Activated naive CD4-positive, alpha-beta T cell treated with anti-CD3 and anti-CD28 coated beads for 36 hours (primary cell): ENCODE measurements at regions of chr1 and their contacts with region 1.

Region 1: GRCh38 chr1:113949007-113949406 is 19.9 kb downstream of the HIPK1 start:
- DNase-seq: no peak
- H3K4me3 Mint-ChIP-seq: no peak overlapping the region
- H3K27ac Mint-ChIP-seq: peak overlapping the region; percentile 79
- H3K4me1 Mint-ChIP-seq: peaks cover 74% of the 10 kb centered on the region
- H3K27me3 Mint-ChIP-seq: no peaks in the 10 kb centered on the region

Region 2: GRCh38 chr1:113133038-113133437 is 816.0 kb before region 1 on chr1:
- CTCF ChIA-PET with region 1: no interaction called
- intact Hi-C with region 1: loop called (anchors 10 kb)
- DNase-seq: peak; percentile 69
- H3K4me3 Mint-ChIP-seq: no peak overlapping the region
- H3K27ac Mint-ChIP-seq: peak overlapping the region; percentile 76
- H3K4me1 Mint-ChIP-seq: peaks cover 64% of the 10 kb centered on the region
- H3K27me3 Mint-ChIP-seq: no peaks in the 10 kb centered on the region

Region 3: GRCh38 chr1:113826162-113826561 is 122.8 kb before region 1 on chr1:
- CTCF ChIA-PET with region 1: no interaction called
- intact Hi-C with region 1: no loop called
- DNase-seq: no peak
- H3K4me3 Mint-ChIP-seq: no peak overlapping the region
- H3K27ac Mint-ChIP-seq: no peak overlapping the region
- H3K4me1 Mint-ChIP-seq: peaks cover 8% of the 10 kb centered on the region
- H3K27me3 Mint-ChIP-seq: no peaks in the 10 kb centered on the region

Region 4: DNA sequence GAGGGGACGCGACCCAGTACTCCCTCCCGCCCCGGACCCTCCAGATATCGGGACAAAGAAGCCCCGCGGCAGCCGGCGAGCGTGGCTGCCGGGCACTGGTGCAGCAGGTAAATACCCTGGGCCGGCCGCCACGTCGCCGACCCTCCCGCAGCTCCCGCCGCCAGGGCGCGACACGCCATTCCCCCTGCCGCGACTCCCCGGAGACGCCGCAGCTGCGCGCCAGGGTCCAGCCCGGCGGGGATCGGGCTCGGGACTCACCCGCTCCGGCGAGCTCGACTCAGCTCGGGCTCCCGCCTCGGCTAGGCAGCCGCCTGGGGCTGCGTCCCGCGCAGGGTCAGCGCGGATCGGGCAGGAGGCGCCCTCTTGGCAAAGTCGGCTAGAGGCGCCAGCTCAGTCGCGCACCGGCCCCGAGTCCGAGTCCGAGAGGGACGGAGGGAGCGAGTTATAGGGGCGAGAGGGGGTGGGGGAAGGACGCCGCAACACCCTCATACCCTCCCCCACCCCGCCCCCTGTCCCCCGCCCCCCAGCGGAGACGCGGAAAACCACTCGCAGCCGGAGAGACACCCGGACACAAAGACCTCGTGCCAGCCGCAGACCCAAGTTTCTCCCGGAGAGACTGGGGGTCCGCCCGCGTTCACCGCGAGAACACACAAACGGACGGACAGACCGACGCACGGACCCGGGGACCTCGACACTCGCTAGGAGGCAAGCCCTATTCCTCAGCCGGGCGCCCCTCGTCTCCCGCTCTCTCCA is 203.7 kb after region 1 on chr1:
- CTCF ChIA-PET with region 1: no interaction called
- intact Hi-C with region 1: no loop called
- DNase-seq: peak; percentile 18
- H3K4me3 Mint-ChIP-seq: peak overlapping the region; percentile 19
- H3K27ac Mint-ChIP-seq: no peak overlapping the region
- H3K4me1 Mint-ChIP-seq: peaks cover 11% of the 10 kb centered on the region
- H3K27me3 Mint-ChIP-seq: peaks cover 54% of the 10 kb centered on the region